Thyroid gland (tissue), 4 donors: ENCODE measurements at regions of chr6 and their contacts with region 1.

Region 1: DNA sequence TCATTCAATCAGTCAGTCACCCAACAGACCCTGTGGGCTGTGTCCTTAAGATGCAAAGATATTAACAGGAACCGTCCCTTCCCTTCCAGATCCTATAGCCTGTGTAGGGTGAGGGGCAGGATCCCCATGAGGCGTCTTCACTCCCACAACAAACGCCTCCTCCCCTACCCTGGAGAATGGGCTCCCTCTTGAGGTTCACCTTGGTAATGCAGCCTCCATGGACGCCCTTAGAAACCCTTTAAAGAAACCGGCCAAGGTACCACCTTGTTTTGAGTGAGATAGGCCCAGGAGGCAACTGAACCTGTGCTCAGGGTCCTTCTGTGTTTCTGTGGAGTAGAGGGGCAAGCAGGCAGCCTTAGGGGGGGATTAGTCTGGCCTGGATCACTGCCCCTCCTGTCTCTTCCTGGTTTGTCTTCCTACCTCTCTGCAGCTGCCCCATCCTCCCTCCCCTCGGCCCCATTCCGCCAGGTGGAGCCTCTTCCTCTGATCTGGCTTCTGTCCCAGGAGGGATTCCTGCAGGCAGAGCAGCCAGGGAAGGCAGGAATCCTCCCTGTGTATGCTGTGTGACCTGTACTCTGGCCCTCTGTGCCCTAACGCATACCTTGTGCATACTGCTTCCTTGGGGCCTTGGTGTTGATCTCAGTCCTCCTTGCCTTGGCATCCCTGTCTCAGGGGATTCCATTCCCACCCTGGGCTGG is 6.6 kb upstream of the GUCA1A start:
- DNase-seq: peak; percentile 76 to 78
- H3K4me3 ChIP-seq: no peak overlapping the region
- H3K27ac ChIP-seq: peak overlapping the region; percentile 63 to 70 (median 68)
- H3K4me1 ChIP-seq: peaks cover 10 to 36% of the 10 kb centered on the region in 2 donors
- H3K27me3 ChIP-seq: no peaks in the 10 kb centered on the region
- CTCF ChIP-seq: peak; percentile 91 to 98 (median 94)
- POLR2A ChIP-seq: no peak

Region 2: DNA sequence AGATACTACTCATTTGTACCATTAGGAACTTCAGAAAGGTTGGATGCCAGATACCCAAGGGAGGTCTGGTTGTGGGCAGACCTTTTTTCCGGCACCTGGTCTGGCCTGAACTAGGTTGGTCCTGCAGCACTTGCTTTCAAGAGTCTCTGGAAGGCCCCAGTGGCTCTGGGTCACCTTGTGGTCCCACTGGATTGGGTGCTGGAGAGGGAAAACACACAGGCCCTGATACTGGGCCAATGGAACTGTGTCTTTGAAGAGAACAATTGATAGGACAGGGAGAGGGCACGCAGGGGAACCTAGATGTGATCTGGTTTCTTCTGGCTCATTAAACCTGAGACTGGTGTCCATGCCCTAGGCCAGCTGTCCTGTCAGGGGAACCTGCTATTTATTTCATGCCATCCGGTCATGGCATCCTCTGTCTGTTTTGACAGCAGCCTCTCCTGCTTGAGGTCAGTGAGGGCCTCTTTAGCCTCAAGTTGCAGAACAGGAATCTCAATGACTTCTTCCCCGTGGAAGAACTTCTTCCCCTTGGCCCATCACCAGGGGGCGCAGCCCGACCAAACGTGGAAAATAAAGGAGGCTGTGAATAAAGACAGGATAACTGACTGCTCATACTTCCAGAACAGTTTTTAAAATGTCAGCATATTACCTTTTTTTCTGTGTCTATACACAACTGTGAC is 91.3 kb before region 1 on chr6:
- intact Hi-C with region 1: loop called (anchors 5 kb)
- DNase-seq: peak; percentile 94 to 97
- H3K4me3 ChIP-seq: no peak overlapping the region
- H3K27ac ChIP-seq: peak overlapping the region; percentile 73 to 78 (median 77)
- H3K4me1 ChIP-seq: peaks cover 15% of the 10 kb centered on the region in 2 donors
- H3K27me3 ChIP-seq: no peaks in the 10 kb centered on the region
- CTCF ChIP-seq: peak; percentile 54 to 98 (median 90)
- POLR2A ChIP-seq: no peak

Region 3: GRCh38 chr6:42104095-42104806 is 62.3 kb before region 1 on chr6:
- intact Hi-C with region 1: loop called (anchors 10 kb)
- DNase-seq: peak; percentile 82 to 85
- H3K4me3 ChIP-seq: peak overlapping the region in 1 of 3 donors; percentile 28
- H3K27ac ChIP-seq: peak overlapping the region; percentile 80 to 89 (median 86)
- H3K4me1 ChIP-seq: peaks cover 41 to 56% of the 10 kb centered on the region in 2 donors
- H3K27me3 ChIP-seq: no peaks in the 10 kb centered on the region
- CTCF ChIP-seq: peak; percentile 33 to 79 (median 62)
- POLR2A ChIP-seq: no peak

Region 4: GRCh38 chr6:42210551-42210950 is 44.0 kb after region 1 on chr6:
- intact Hi-C with region 1: loop called (anchors 5 kb)
- DNase-seq: no peak
- H3K4me3 ChIP-seq: no peak overlapping the region
- H3K27ac ChIP-seq: peak overlapping the region in 1 of 3 donors; percentile 7
- H3K4me1 ChIP-seq: peaks cover 0 to 6% of the 10 kb centered on the region in 2 donors
- H3K27me3 ChIP-seq: no peaks in the 10 kb centered on the region
- CTCF ChIP-seq: no peak
- POLR2A ChIP-seq: no peak

Region 5: DNA sequence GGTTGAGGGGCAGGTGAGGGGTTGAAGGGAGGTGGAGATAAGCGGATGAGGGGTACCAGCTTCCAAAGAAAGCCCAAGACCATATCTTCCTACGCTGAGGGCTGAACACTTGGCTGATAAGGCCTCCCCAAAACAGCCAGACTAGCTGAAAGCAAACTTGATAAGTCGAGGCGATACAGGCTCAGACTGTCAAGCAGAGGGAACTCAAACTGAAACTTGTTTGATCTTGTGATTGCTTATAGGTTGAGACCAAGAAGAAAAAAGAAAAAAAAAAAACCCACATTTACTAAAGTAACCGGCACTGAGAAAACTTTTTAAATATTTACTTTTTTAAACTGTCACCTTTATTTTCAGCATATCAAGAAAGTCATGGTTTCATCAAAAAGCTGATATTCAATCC is 211.5 kb after region 1 on chr6:
- intact Hi-C with region 1: no loop called
- DNase-seq: no peak
- H3K4me3 ChIP-seq: no peak overlapping the region
- H3K27ac ChIP-seq: no peak overlapping the region
- H3K4me1 ChIP-seq: no peaks in the 10 kb centered on the region
- H3K27me3 ChIP-seq: no peaks in the 10 kb centered on the region
- CTCF ChIP-seq: no peak
- POLR2A ChIP-seq: no peak